ENCODE measurements at regions of chr7 and their contacts with region 1.

Region 1: DNA sequence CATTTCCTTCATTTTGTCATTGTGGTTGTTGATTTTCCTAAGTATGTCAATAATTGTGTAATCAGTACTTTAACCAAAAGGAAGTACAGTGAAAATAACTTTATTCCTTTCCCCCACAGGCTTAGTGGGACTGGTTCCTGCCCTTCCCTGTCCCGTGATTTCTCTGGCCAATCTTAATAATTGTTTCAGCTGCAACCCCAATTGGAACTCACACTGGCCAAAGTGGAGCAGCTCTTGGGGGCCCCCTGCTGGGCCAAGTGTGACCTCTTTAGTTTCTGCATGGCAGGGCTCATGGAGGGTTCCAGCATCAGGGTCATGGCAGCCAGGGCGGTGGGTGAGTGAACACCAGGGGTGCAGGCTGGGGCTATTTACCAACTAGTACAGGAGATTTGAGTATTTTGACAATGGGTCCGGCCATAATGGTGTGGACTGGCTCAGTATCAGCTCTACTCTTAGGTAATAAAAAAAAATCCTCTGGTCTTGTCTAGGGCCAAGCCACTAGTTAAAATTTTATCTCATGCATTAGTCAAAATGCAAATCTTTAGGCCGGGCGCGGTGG is 31.7 kb downstream of the CYCS start:
- DNase-seq: peak; percentile 83
- H3K4me3 ChIP-seq: no peak overlapping the region
- H3K27ac ChIP-seq: no peak overlapping the region
- H3K4me1 ChIP-seq: peaks cover 0 to 6% of the 10 kb centered on the region in 2 experiments; a peak in 1 of 4 replicates
- H3K27me3 ChIP-seq: no peaks in the 10 kb centered on the region
- CTCF ChIP-seq: peak; percentile 99
- EP300 ChIP-seq: no peak
- RAD21 ChIP-seq: peak; percentile 81

Region 2: DNA sequence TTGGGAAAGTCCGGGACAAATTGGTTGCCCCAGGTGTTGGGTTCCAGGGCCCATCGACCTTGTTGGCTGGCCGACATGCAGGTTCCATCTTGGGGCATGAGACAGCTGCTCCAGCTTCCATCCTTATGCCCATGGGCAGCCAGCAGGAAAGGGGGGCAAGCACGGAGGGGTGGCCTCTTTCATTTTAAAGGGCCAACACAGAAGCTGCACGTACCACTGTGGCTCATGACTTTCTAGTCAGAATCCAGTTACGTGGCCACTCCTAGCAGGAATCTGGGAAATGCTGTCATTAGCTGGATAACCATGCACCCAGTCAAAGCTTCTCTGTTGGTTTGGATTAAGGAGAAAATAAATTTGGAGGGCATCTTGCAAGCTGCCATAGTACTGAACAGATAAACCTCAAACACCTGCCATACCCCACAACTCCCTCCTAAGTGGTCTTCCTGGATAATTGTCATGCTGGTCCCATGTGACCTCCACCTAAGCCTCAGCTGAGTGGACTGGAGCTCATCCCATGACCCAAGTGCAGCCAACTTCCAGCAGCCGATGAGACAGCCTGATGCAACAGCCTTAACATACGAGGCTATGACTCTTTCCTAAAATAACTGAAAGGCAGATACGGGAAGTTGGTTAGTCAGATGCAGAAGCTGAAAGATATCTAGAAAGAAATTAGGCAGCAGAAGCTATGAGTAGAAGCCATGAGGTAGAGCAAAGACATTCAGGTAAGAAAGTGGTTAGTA is 314.6 kb before region 1 on chr7:
- CTCF ChIA-PET with region 1: interaction called, 20 read pairs
- POLR2A ChIA-PET with region 1: no interaction called
- DNase-seq: no peak
- H3K4me3 ChIP-seq: no peak overlapping the region
- H3K27ac ChIP-seq: peak overlapping the region in 1 of 2 experiments; percentile 45; a peak in 2 of 4 replicates
- H3K4me1 ChIP-seq: peaks cover 0 to 8% of the 10 kb centered on the region in 2 experiments; a peak in 1 of 4 replicates
- H3K27me3 ChIP-seq: no peaks in the 10 kb centered on the region
- CTCF ChIP-seq: no peak
- EP300 ChIP-seq: no peak
- RAD21 ChIP-seq: no peak

Region 3: DNA sequence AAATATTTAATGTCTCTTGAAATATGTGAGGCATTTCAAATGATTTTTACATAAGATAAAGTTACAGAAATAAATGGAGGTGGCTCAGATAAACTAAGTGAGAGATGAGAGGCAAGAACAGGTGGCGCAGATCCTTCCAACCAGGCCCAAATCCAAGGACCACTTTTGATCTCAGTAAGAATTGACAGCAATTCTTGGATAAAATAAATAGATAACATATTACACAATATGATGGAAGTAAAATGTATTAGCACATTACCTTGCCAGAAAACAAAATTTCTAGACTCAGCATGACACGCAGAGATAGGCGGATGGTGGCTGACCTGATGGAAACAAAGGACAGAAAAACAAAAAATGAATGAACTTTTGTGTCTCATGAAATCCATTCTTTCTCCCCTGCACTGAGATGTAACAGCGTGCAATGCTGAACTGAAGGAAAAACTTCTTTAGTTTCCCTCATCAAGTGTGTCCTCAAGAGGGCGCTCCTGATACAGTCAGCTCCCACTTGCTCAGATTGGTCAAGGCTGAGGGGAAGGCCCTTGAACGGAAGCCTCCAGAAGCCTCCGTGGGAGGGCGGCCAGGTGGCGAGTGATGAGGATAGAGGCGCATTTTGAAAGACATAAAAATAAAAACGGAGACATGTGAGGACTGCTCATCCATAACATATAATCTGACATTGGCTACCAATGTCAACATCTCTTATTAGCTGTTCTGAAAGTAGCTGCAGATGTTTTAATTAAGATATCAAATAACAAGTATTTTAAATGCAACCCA is 273.2 kb before region 1 on chr7:
- CTCF ChIA-PET with region 1: interaction called, 396 read pairs
- POLR2A ChIA-PET with region 1: no interaction called
- DNase-seq: peak; percentile 77
- H3K4me3 ChIP-seq: no peak overlapping the region
- H3K27ac ChIP-seq: peak overlapping the region; percentile 70 to 93; a peak in 3 of 4 replicates
- H3K4me1 ChIP-seq: peaks cover 5 to 18% of the 10 kb centered on the region in 2 experiments; a peak in 3 of 4 replicates
- H3K27me3 ChIP-seq: no peaks in the 10 kb centered on the region
- CTCF ChIP-seq: peak; percentile 99
- EP300 ChIP-seq: peak in 1 of 2 experiments; percentile 19; a peak in 1 of 4 replicates
- RAD21 ChIP-seq: peak; percentile 98

Region 4: GRCh38 chr7:24979863-24980533 is 113.3 kb before region 1 on chr7 and contains the start of gene OSBPL3:
- CTCF ChIA-PET with region 1: interaction called, 19 read pairs
- POLR2A ChIA-PET with region 1: no interaction called
- DNase-seq: peak; percentile 100
- H3K4me3 ChIP-seq: peak within 1 kb of the TSS; percentile 73 to 97
- H3K27ac ChIP-seq: peak within 1 kb of the TSS; percentile 84 to 87
- H3K4me1 ChIP-seq: peaks cover 21 to 28% of the 10 kb centered on the region in 2 experiments; a peak in 3 of 4 replicates
- H3K27me3 ChIP-seq: no peaks in the 10 kb centered on the region
- CTCF ChIP-seq: no peak
- EP300 ChIP-seq: peak in 1 of 2 experiments; percentile 2; a peak in 1 of 4 replicates
- RAD21 ChIP-seq: peak; percentile 38
- polyA plus RNA-seq, gene OSBPL3: 22.6 and 23.2 TPM in 2 replicates

Region 5: GRCh38 chr7:25075459-25075858 is 17.9 kb before region 1 on chr7:
- CTCF ChIA-PET with region 1: interaction called, 115 read pairs
- POLR2A ChIA-PET with region 1: no interaction called
- DNase-seq: no peak
- H3K4me3 ChIP-seq: no peak overlapping the region
- H3K27ac ChIP-seq: no peak overlapping the region
- H3K4me1 ChIP-seq: peaks cover 0 to 3% of the 10 kb centered on the region in 2 experiments; a peak in 1 of 4 replicates
- H3K27me3 ChIP-seq: no peaks in the 10 kb centered on the region
- CTCF ChIP-seq: no peak
- EP300 ChIP-seq: no peak
- RAD21 ChIP-seq: no peak

Region 6: DNA sequence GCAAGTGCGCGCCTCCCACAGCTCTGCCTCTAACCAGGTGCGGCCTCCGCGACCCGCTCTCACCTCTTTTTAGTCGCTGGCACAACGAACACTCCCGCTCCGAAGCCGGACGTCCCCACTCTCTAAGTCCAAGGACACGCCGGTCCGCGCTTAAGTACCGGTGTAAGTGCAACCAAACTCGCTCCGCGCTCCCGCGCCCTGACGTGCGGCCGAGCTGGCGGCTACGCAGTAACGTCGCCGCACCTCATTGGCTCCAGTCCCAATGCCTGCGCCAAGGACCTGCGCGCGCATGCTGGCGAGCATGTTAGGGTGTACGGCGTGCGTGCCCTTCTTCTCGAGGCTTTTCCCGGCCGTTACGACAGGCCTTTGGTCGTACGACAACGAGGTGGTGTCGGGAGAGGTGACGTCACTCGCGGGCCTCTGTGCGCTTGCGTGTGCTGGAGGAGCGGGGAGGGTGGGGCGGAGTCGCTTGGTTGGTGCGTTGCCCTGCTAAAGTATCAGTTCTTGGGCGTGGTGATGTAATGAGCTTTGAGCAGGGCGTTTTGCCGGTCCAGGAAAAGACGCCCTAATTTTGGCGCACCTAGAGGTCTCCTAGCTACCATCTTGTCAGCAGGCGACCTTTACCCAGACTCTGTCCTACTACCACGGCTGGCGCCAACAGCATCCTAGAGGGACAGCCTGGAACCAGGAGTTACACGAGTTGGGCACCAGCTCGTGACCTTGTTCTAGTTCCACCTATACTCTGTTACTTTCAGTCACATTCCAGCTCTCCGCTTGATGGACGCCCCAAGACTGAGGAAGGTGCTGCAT is 32.0 kb after region 1 on chr7 and contains the start of gene CYCS:
- CTCF ChIA-PET with region 1: interaction called, 68 read pairs
- POLR2A ChIA-PET with region 1: interaction called, 8 read pairs
- DNase-seq: peak; percentile 95
- H3K4me3 ChIP-seq: peak within 1 kb of the TSS; percentile 77 to 88
- H3K27ac ChIP-seq: peak within 1 kb of the TSS; percentile 73 to 93
- H3K4me1 ChIP-seq: peaks cover 12 to 16% of the 10 kb centered on the region in 2 experiments
- H3K27me3 ChIP-seq: no peaks in the 10 kb centered on the region
- CTCF ChIP-seq: no peak
- EP300 ChIP-seq: no peak
- RAD21 ChIP-seq: no peak
- polyA plus RNA-seq, gene CYCS: 22.9 and 23.8 TPM in 2 replicates